ENCODE measurements at regions of chr4 and their contacts with region 1.

Region 1: GRCh38 chr4:55887594-55887993 is 34.1 kb downstream of the EXOC1 start:
- DNase-seq: no peak
- H3K4me3 Mint-ChIP-seq: no peak overlapping the region
- H3K27ac Mint-ChIP-seq: no peak overlapping the region
- H3K4me1 Mint-ChIP-seq: peaks cover 13% of the 10 kb centered on the region
- H3K27me3 Mint-ChIP-seq: no peaks in the 10 kb centered on the region

Region 2: GRCh38 chr4:55801498-55801897 is 86.1 kb before region 1 on chr4:
- CTCF ChIA-PET with region 1: no interaction called
- DNase-seq: no peak
- H3K4me3 Mint-ChIP-seq: no peak overlapping the region
- H3K27ac Mint-ChIP-seq: no peak overlapping the region
- H3K4me1 Mint-ChIP-seq: no peaks in the 10 kb centered on the region
- H3K27me3 Mint-ChIP-seq: peaks cover 9% of the 10 kb centered on the region

Region 3: GRCh38 chr4:55866973-55867574 is 20.5 kb before region 1 on chr4:
- CTCF ChIA-PET with region 1: interaction called, 10 read pairs
- DNase-seq: peak; percentile 22
- H3K4me3 Mint-ChIP-seq: no peak overlapping the region
- H3K27ac Mint-ChIP-seq: no peak overlapping the region
- H3K4me1 Mint-ChIP-seq: peaks cover 4% of the 10 kb centered on the region
- H3K27me3 Mint-ChIP-seq: no peaks in the 10 kb centered on the region

Measured in activated naive CD4-positive, alpha-beta T cell treated with anti-CD3 and anti-CD28 coated beads, Interleukin-2, amount 10 ng/mL, durations not matched to agents 7 days and 5 days (primary cell).